ENCODE measurements at regions of chr6 and their contacts with region 1.

Region 1: DNA sequence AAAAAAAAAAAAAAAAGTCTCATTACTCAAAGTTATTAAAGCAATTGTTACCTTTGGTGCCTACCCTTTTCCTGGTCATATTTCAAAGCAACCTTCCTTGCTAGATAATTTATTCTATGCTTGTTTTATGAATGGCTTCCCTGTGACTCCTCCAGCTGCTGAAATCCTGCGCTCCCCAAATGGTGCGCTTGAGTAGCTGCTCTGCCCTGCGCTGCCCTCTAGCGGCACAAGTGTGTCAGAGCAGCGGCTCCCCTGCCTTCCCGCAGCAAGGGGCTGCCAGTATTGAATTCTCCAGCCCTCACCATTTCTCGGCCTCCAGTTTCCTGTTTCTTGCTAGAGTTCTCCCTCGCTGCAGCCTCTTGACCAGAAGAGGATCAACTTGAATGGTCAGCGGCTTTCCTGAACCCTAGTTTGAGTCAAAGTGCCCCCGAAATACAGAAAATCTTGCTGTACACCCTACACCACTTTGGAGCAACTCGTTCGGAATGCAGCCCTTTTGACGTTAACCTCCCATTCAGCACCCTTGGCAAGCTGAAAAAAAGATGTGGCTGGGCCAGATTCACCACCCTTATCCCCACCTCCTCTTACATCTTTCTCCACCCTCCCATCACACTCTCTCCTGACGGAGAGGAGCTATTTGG is 60.4 kb upstream of the KLHL31 start:
- DNase-seq: peak; percentile 77 to 85
- H3K4me3 ChIP-seq: no peak overlapping the region
- H3K27ac ChIP-seq: no peak overlapping the region
- H3K4me1 ChIP-seq: peaks cover 10 to 32% of the 10 kb centered on the region in 2 donors
- H3K27me3 ChIP-seq: no peaks in the 10 kb centered on the region
- CTCF ChIP-seq: peak; percentile 91 to 97 (median 94)
- POLR2A ChIP-seq: no peak

Region 2: GRCh38 chr6:53544470-53545308 is 181.2 kb before region 1 on chr6 and contains the start of gene GCLC:
- intact Hi-C with region 1: loop called (anchors 10 kb)
- DNase-seq: peak; percentile 94 to 95
- H3K4me3 ChIP-seq: peak within 1 kb of the TSS; percentile 68 to 85 (median 75)
- H3K27ac ChIP-seq: peak within 1 kb of the TSS; percentile 93 to 94 (median 93)
- H3K4me1 ChIP-seq: peaks cover 13 to 25% of the 10 kb centered on the region in 2 donors
- H3K27me3 ChIP-seq: no peaks in the 10 kb centered on the region
- CTCF ChIP-seq: peak; percentile 21 to 80 (median 74)
- POLR2A ChIP-seq: peak; percentile 58 to 95
- total RNA-seq, gene GCLC: 67.3 to 210 (median 82.0) TPM